Activated CD8-positive, alpha-beta T cell treated with anti-CD3 and anti-CD28 coated beads for 36 hours (primary cell): ENCODE measurements at regions of chrX and their contacts with region 1.

Region 1: DNA sequence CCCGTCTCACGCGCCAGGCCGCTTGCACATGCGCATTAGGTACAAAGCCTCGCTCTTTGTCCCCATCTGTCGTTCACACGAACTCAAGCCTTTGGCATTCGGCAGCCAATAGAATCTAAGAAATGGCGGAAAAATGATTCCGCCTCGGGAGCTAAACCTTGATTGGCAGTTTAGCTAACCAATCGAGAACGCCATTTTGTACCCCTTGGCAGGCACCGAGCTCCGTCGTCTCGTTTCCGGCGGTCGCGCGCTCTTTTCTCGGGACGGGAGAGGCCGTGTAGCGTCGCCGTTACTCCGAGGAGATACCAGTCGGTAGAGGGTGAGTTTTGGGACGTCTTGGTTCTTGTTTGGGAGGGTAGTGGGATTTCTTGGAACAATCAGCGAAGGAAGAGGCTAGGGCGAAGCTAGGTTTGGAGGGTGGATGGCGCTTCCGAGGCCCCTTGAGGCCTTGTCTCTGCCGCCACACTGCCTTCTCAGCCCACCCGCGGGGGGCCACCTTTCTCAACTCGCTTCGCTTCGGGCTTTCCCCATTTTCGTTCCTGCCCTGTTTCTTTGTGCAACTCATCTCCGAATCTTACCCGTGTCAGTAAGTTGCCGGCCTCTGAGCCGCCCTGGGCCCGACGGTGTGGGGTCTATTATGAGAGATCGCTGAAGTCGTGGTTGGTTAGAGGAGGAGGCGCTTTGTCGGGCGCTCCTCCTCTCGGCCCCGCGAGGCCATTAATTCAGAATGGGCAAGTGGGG is at the start of gene NONO:
- DNase-seq: peak; percentile 87
- ATAC-seq: peak; percentile 81
- H3K4me3 Mint-ChIP-seq: peak within 1 kb of the TSS; percentile 86
- H3K27ac Mint-ChIP-seq: peak within 1 kb of the TSS; percentile 95
- H3K4me1 Mint-ChIP-seq: peaks cover 5% of the 10 kb centered on the region
- H3K27me3 Mint-ChIP-seq: no peaks in the 10 kb centered on the region
- CTCF ChIP-seq: no peak
- total RNA-seq, gene NONO: 461 to 487 TPM

Region 2: GRCh38 chrX:71181910-71182799 is 101.4 kb before region 1 on chrX:
- CTCF ChIA-PET with region 1: interaction called, 7 read pairs
- POLR2A ChIA-PET with region 1: interaction called, 10 read pairs
- intact Hi-C with region 1: no loop called
- DNase-seq: peak; percentile 90
- ATAC-seq: peak; percentile 95
- H3K4me3 Mint-ChIP-seq: peak overlapping the region; percentile 92
- H3K27ac Mint-ChIP-seq: peak overlapping the region; percentile 99
- H3K4me1 Mint-ChIP-seq: peaks cover 16% of the 10 kb centered on the region
- H3K27me3 Mint-ChIP-seq: no peaks in the 10 kb centered on the region
- CTCF ChIP-seq: no peak

Region 3: GRCh38 chrX:71198066-71198465 is 85.5 kb before region 1 on chrX:
- CTCF ChIA-PET with region 1: interaction called, 5 read pairs
- POLR2A ChIA-PET with region 1: interaction called, 5 read pairs
- intact Hi-C with region 1: loop called (anchors 10 kb)
- DNase-seq: peak; percentile 24
- ATAC-seq: peak; percentile 26
- H3K4me3 Mint-ChIP-seq: peak overlapping the region; percentile 79
- H3K27ac Mint-ChIP-seq: peak overlapping the region; percentile 87
- H3K4me1 Mint-ChIP-seq: peaks cover 16% of the 10 kb centered on the region
- H3K27me3 Mint-ChIP-seq: no peaks in the 10 kb centered on the region
- CTCF ChIP-seq: no peak

Region 4: GRCh38 chrX:71254092-71254941 is 29.3 kb before region 1 on chrX and contains the start of gene ZMYM3:
- CTCF ChIA-PET with region 1: interaction called, 15 read pairs
- POLR2A ChIA-PET with region 1: interaction called, 12 read pairs
- intact Hi-C with region 1: loop called (anchors 2 kb)
- DNase-seq: peak; percentile 86
- ATAC-seq: peak; percentile 88
- H3K4me3 Mint-ChIP-seq: peak within 1 kb of the TSS; percentile 89
- H3K27ac Mint-ChIP-seq: peak within 1 kb of the TSS; percentile 91
- H3K4me1 Mint-ChIP-seq: peaks cover 32% of the 10 kb centered on the region
- H3K27me3 Mint-ChIP-seq: no peaks in the 10 kb centered on the region
- CTCF ChIP-seq: no peak
- total RNA-seq, gene ZMYM3: 25.8 to 27.5 TPM

Region 5: GRCh38 chrX:71298119-71298518 is 14.5 kb after region 1 on chrX:
- CTCF ChIA-PET with region 1: no interaction called
- POLR2A ChIA-PET with region 1: interaction called, 14 read pairs
- intact Hi-C with region 1: no loop called
- DNase-seq: no peak
- ATAC-seq: no peak
- H3K4me3 Mint-ChIP-seq: no peak overlapping the region
- H3K27ac Mint-ChIP-seq: no peak overlapping the region
- H3K4me1 Mint-ChIP-seq: peaks cover 27% of the 10 kb centered on the region
- H3K27me3 Mint-ChIP-seq: no peaks in the 10 kb centered on the region
- CTCF ChIP-seq: no peak

Region 6: GRCh38 chrX:71365876-71366673 is 82.5 kb after region 1 on chrX and contains the start of gene TAF1:
- CTCF ChIA-PET with region 1: interaction called, 4 read pairs
- POLR2A ChIA-PET with region 1: interaction called, 19 read pairs
- intact Hi-C with region 1: loop called (anchors 5 kb)
- DNase-seq: peak; percentile 96
- ATAC-seq: peak; percentile 90
- H3K4me3 Mint-ChIP-seq: peak within 1 kb of the TSS; percentile 94
- H3K27ac Mint-ChIP-seq: peak within 1 kb of the TSS; percentile 98
- H3K4me1 Mint-ChIP-seq: peaks cover 18% of the 10 kb centered on the region
- H3K27me3 Mint-ChIP-seq: no peaks in the 10 kb centered on the region
- CTCF ChIP-seq: no peak
- total RNA-seq, gene TAF1: 26.8 to 30.9 TPM

Region 7: GRCh38 chrX:71393919-71394318 is 110.3 kb after region 1 on chrX:
- CTCF ChIA-PET with region 1: no interaction called
- POLR2A ChIA-PET with region 1: no interaction called
- intact Hi-C with region 1: no loop called
- DNase-seq: no peak
- ATAC-seq: no peak
- H3K4me3 Mint-ChIP-seq: no peak overlapping the region
- H3K27ac Mint-ChIP-seq: peak overlapping the region; percentile 61
- H3K4me1 Mint-ChIP-seq: peaks cover 1% of the 10 kb centered on the region
- H3K27me3 Mint-ChIP-seq: no peaks in the 10 kb centered on the region
- CTCF ChIP-seq: no peak

Region 8: DNA sequence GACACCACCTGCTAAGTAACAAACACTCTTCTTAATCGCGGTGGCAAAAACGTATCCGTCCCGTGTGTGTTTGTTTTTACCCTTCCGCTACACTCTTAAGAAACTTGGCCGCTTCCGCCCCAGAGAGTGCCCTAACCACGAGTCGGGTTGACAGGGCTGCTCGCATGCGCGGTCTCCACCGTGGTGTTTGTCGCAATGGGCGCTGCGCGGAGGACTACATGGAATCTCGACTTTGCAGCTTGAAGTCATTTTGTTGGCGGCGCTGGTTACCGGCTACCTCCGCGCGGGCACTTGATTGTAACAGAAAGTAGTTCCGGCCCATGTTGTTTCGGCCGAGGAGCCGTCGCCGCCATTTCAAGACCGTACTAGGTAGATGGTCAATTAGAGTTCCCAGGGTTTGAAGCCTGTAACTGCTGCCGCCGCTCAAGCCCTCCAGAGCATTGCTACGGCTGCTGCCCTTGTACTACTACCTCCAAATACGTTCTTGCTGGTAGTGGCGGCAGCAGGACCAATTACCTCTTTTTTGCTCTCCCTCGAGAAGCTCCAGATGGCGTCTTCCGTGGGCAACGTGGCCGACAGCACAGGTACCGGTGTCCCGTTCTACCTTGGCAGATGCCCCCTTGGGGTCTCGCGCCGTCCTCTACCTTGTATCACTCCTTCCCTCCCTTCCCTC is 249.3 kb after region 1 on chrX and contains the start of gene OGT:
- CTCF ChIA-PET with region 1: no interaction called
- POLR2A ChIA-PET with region 1: interaction called, 13 read pairs
- intact Hi-C with region 1: loop called (anchors 10 kb)
- DNase-seq: peak; percentile 96
- ATAC-seq: peak; percentile 74
- H3K4me3 Mint-ChIP-seq: peak within 1 kb of the TSS; percentile 98
- H3K27ac Mint-ChIP-seq: peak within 1 kb of the TSS; percentile 99
- H3K4me1 Mint-ChIP-seq: peaks cover 15% of the 10 kb centered on the region
- H3K27me3 Mint-ChIP-seq: no peaks in the 10 kb centered on the region
- CTCF ChIP-seq: no peak
- total RNA-seq, gene OGT: 354 to 358 TPM